ENCODE measurements at regions of chr7 and their contacts with region 1.

Region 1: DNA sequence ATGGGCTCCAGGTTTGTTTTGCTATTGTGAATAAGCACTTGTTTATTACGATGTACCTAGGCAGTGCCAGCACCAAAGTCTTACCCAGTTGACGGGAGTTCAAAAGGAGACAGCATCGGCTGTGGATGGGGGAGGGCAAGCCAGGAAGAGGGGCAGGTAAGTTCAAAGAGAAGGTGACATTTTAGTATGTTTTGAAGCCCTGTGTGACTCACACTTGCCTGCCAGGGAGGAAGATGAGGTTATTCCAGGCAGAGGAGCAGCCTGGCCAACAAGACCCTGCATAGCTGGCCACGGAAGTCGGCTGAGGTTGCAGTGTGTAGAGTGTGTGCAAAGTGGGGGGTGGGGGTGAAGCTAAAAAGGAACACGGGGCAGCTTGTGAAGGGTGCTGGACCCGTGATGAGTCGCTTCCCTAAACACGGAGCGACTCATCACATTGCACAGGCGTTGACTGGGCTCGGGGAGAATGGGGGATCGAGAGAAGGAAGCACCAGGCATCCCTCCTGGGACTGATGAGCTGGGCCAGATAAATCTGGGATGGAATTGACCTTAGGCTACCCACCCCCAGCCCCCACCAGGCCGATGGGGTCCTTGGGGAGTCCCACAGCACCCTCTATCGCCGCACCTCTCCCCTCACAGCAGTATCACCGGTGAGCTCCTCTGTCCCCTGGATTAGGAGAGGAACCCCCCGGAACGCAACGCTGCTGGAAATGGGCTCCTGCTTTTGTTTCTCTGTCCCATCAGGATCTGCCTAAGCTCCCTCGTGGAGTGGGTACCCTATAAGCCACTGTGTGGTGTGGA is 97.9 kb upstream of the IKZF1 start:
- DNase-seq: peak; percentile 87
- ATAC-seq: peak; percentile 81
- H3K4me3 Mint-ChIP-seq: peak overlapping the region; percentile 63
- H3K27ac Mint-ChIP-seq: peak overlapping the region; percentile 93
- H3K4me1 Mint-ChIP-seq: peaks cover 97% of the 10 kb centered on the region
- H3K27me3 Mint-ChIP-seq: no peaks in the 10 kb centered on the region

Region 2: DNA sequence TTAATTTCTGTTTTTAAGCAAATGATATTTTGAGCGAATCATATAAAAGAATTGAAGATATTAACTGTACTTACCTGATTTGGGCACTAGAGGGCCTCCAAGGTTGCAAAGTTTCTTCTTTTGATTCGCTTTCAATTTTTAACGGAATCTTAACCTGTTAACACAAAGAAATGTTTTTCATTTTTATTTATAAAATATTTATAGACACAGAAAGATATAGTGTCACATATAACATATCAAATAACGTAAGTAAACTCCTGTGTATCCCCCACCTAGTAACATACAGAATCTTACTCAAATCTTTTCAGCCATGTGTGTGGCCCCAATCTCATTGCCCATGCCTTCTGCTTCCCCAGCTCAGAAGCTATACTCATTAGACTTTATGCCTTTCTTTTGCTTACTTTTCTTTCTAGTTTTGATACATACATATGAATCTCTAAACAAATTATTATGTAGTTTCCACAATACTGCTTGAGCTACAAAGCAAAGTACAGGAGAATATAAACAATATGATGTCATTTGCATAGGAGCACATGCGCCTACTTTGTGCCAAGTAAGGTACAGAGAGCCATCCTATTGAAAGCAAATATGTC is 64.1 kb before region 1 on chr7:
- CTCF ChIA-PET with region 1: interaction called, 22 read pairs
- POLR2A ChIA-PET with region 1: interaction called, 17 read pairs
- DNase-seq: peak; percentile 71
- ATAC-seq: peak; percentile 72
- H3K4me3 Mint-ChIP-seq: peak overlapping the region; percentile 50
- H3K27ac Mint-ChIP-seq: peak overlapping the region; percentile 50
- H3K4me1 Mint-ChIP-seq: peaks cover 38% of the 10 kb centered on the region
- H3K27me3 Mint-ChIP-seq: peaks cover 6% of the 10 kb centered on the region

Region 3: DNA sequence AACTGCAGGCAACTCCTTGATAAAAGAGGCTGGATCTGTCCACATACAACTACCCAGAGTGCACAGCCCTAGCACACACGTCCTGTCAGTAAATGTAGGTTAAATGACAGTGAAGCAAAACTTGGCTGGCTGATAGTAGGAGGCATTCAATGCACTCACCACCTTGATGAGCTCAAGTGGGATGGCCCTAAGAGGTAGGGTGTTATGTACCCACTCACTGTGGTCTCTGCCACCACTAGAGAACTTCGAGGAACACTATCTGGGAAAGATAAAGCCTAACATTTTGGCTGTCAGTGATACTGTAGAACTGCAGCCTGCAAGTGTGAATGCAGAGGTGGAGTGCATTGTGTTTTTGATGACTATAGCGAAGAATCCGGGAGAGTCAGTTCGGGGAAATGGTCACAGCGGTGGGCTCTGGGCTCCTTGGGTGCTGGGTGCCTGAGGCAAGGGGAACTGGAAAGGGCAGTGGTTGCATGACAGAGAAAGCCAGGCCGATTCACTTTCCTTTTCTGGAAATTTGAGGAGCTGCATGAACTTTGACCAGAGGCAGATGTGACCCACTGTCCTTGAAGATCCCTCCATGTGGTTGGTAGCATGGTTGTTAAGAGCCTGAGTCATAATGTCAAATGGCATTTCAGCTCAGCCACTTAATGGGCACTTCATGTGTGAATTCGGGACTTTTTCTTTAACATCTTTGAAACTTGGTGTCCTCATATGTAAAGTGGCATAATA is 20.5 kb before region 1 on chr7:
- CTCF ChIA-PET with region 1: interaction called, 19 read pairs
- POLR2A ChIA-PET with region 1: no interaction called
- DNase-seq: no peak
- ATAC-seq: no peak
- H3K4me3 Mint-ChIP-seq: no peak overlapping the region
- H3K27ac Mint-ChIP-seq: no peak overlapping the region
- H3K4me1 Mint-ChIP-seq: peaks cover 7% of the 10 kb centered on the region
- H3K27me3 Mint-ChIP-seq: no peaks in the 10 kb centered on the region

Region 4: GRCh38 chr7:50272808-50273207 is 66.2 kb after region 1 on chr7:
- CTCF ChIA-PET with region 1: interaction called, 113 read pairs
- POLR2A ChIA-PET with region 1: interaction called, 48 read pairs
- DNase-seq: no peak
- ATAC-seq: no peak
- H3K4me3 Mint-ChIP-seq: no peak overlapping the region
- H3K27ac Mint-ChIP-seq: peak overlapping the region; percentile 68
- H3K4me1 Mint-ChIP-seq: peaks cover 71% of the 10 kb centered on the region
- H3K27me3 Mint-ChIP-seq: no peaks in the 10 kb centered on the region

Region 5: GRCh38 chr7:50304158-50304910 is 97.7 kb after region 1 on chr7 and contains the start of gene IKZF1:
- CTCF ChIA-PET with region 1: interaction called, 197 read pairs
- POLR2A ChIA-PET with region 1: interaction called, 127 read pairs
- DNase-seq: peak; percentile 69
- ATAC-seq: peak; percentile 43
- H3K4me3 Mint-ChIP-seq: peak within 1 kb of the TSS; percentile 92
- H3K27ac Mint-ChIP-seq: peak within 1 kb of the TSS; percentile 98
- H3K4me1 Mint-ChIP-seq: peaks cover 35% of the 10 kb centered on the region
- H3K27me3 Mint-ChIP-seq: no peaks in the 10 kb centered on the region
- total RNA-seq, gene IKZF1: 370 to 374 TPM

Region 6: DNA sequence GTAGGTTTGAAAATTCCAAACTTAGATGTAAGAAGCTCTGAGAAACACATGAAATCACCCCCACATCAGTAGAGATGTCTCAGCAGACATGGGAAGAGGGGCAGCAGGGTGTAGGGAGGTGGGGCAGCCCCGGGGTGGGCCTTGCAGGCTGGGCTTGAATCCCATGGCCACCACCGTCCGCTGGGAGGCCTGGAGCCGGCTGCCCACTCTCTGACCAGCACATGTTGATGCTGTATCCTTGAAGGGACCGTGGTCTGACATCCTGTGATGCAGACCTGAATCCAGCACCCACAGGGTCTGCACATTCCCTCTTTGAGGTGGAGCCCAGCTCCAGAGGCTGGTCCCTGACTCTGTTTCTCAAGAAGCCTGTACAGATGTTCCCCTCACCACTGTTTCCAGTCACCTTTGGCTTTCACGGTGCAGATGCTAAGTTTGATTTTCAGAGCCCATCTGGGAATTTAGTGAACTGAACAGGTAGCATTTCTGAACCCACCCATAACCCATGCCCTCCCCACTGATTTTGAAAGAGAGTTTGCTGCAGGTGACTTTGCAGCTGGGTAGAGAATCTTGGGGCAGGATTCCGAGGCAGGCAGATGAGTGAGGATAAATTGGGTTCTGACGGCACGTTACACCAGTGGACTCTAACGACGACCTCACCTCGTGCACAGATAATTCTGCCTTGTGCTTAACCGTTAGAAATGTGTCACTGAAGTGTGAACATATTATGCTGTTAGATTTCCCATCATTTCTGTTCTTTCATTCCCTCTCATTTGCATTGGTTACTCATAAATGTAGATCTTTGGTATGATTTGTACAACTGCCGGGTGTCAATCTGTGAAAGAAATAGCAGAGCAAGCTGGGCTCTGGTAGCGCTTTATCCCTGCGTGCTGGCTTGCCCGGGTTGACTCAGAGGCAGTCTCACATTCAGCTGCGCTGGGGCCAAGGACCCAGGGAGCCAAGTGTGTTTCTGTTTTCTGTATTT is 143.6 kb after region 1 on chr7:
- CTCF ChIA-PET with region 1: interaction called, 27 read pairs
- POLR2A ChIA-PET with region 1: interaction called, 3 read pairs
- DNase-seq: peak; percentile 82
- ATAC-seq: peak; percentile 67
- H3K4me3 Mint-ChIP-seq: peak overlapping the region; percentile 64
- H3K27ac Mint-ChIP-seq: peak overlapping the region; percentile 89
- H3K4me1 Mint-ChIP-seq: peaks cover 97% of the 10 kb centered on the region
- H3K27me3 Mint-ChIP-seq: no peaks in the 10 kb centered on the region

Region 7: GRCh38 chr7:50418086-50418515 is 211.4 kb after region 1 on chr7:
- CTCF ChIA-PET with region 1: interaction called, 59 read pairs
- POLR2A ChIA-PET with region 1: no interaction called
- DNase-seq: peak; percentile 86
- ATAC-seq: peak; percentile 90
- H3K4me3 Mint-ChIP-seq: no peak overlapping the region
- H3K27ac Mint-ChIP-seq: no peak overlapping the region
- H3K4me1 Mint-ChIP-seq: peaks cover 27% of the 10 kb centered on the region
- H3K27me3 Mint-ChIP-seq: no peaks in the 10 kb centered on the region